ENCODE measurements at regions of chr20 and their contacts with region 1.

Region 1: DNA sequence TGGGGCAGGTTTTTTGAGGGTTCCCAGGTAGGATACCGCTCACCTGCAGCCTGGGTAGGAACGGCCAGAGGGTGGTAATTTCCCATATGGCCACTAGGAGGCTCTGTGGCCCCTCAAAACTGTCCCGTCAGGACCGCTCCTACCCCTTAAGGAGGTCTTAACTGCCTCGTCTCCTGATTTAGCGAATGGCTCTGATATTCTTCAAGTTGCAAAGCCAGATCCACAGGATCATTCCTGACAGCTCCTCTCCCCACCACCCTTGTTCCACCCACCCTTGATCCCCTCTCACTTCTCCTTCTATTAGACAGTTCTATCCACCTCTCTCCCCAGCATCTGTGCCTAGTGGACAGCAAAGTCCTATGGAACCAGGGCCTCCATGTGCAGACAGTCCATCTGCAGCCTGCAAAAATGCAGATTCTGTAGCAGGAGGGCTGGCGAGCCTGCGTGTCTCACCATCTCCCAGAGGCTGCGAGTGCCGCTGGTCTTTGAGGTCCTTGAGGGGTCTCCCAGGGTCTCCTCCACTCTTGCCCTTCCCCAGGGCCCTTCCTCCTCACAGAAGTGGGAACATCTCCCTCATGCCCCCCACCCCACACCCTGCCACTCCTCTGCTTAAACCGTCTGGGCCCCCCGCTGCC is 34.3 kb upstream of the ZBP1 start:
- DNase-seq: peak; percentile 26 to 59
- ATAC-seq: peak; percentile 54 to 78 (median 74)
- H3K4me3 ChIP-seq: no peak overlapping the region
- H3K27ac ChIP-seq: no peak overlapping the region
- H3K4me1 ChIP-seq: peaks cover 2% of the 10 kb centered on the region
- H3K27me3 ChIP-seq: no peaks in the 10 kb centered on the region
- CTCF ChIP-seq: peak; percentile 97

Region 2: DNA sequence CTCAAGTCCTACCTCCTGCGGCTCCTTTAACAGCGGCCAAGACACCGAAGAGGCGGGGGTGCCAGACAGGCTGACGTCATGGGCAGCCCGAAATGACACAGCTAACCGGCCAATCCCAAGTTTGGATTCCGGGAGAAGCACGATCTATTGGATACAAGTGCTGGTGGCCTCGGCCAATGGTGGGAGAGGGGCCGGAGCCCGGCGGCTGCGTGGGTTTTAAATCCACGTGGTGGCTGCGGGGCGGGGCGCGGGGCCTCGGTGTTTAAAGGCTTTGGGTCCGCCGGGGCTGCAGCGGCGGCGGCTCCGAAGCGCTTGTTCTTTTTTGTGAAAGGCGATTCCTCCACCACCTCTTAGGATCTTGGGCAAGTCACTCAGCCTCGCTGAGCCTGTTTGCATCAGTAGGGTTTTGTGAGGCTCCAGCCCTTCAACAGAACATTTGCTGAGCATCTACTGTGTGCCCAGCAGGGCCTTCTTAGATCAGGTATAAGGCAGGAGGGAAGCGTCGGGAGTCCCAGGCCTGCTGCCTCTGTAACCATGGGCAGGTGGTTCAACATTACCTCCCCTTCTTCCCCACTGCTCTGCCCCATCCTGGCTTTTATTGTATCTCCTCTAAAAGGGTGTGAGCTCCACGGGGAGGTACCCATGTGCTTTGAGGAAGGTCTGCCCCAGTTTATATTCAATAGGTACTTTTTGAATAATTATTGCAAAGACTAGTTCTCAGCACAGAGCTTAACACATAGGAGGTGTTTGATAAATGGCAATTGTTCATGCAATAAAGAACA is 64.2 kb after region 1 on chr20:
- intact Hi-C with region 1: loop called in 1 of 2 experiments (anchors 5 kb)
- DNase-seq: peak; percentile 95 to 97
- ATAC-seq: peak; percentile 88 to 95 (median 90)
- H3K4me3 ChIP-seq: peak overlapping the region; percentile 48
- H3K27ac ChIP-seq: peak overlapping the region; percentile 34
- H3K4me1 ChIP-seq: peaks cover 49% of the 10 kb centered on the region
- H3K27me3 ChIP-seq: no peaks in the 10 kb centered on the region
- CTCF ChIP-seq: no peak

Region 3: GRCh38 chr20:57810511-57811373 is 156.3 kb after region 1 on chr20:
- intact Hi-C with region 1: loop called in 1 of 2 experiments (anchors 10 kb)
- DNase-seq: no peak
- ATAC-seq: peak; percentile 42 to 74 (median 62)
- H3K4me3 ChIP-seq: no peak overlapping the region
- H3K27ac ChIP-seq: no peak overlapping the region
- H3K4me1 ChIP-seq: peaks cover 12% of the 10 kb centered on the region
- H3K27me3 ChIP-seq: no peaks in the 10 kb centered on the region
- CTCF ChIP-seq: no peak

Region 4: GRCh38 chr20:58028123-58028522 is 373.6 kb after region 1 on chr20:
- intact Hi-C with region 1: loop called in 1 of 2 experiments (anchors 5 kb)
- DNase-seq: no peak
- ATAC-seq: no peak
- H3K4me3 ChIP-seq: no peak overlapping the region
- H3K27ac ChIP-seq: no peak overlapping the region
- H3K4me1 ChIP-seq: no peaks in the 10 kb centered on the region
- H3K27me3 ChIP-seq: peaks cover 0 to 11% (median 0%) of the 10 kb centered on the region in 3 donors
- CTCF ChIP-seq: peak; percentile 24

Region 5: GRCh38 chr20:58087193-58087858 is 432.8 kb after region 1 on chr20:
- intact Hi-C with region 1: loop called (anchors 2 to 10 kb)
- DNase-seq: no peak
- ATAC-seq: no peak
- H3K4me3 ChIP-seq: no peak overlapping the region
- H3K27ac ChIP-seq: no peak overlapping the region
- H3K4me1 ChIP-seq: no peaks in the 10 kb centered on the region
- H3K27me3 ChIP-seq: no peaks in the 10 kb centered on the region
- CTCF ChIP-seq: peak; percentile 73

Region 6: GRCh38 chr20:58179432-58180099 is 525.1 kb after region 1 on chr20:
- intact Hi-C with region 1: loop called (anchors 1 to 2 kb)
- DNase-seq: peak; percentile 56 to 71
- ATAC-seq: peak; percentile 66 to 83 (median 72)
- H3K4me3 ChIP-seq: peak overlapping the region; percentile 41
- H3K27ac ChIP-seq: no peak overlapping the region
- H3K4me1 ChIP-seq: no peaks in the 10 kb centered on the region
- H3K27me3 ChIP-seq: peaks cover 0 to 12% (median 2%) of the 10 kb centered on the region in 3 donors
- CTCF ChIP-seq: peak; percentile 99

Region 7: GRCh38 chr20:58209652-58210397 is 555.3 kb after region 1 on chr20:
- intact Hi-C with region 1: loop called in 1 of 2 experiments (anchors 1 kb)
- DNase-seq: peak; percentile 83 to 91
- ATAC-seq: peak; percentile 92 to 96 (median 92)
- H3K4me3 ChIP-seq: no peak overlapping the region
- H3K27ac ChIP-seq: no peak overlapping the region
- H3K4me1 ChIP-seq: no peaks in the 10 kb centered on the region
- H3K27me3 ChIP-seq: peaks cover 0 to 17% (median 4%) of the 10 kb centered on the region in 3 donors
- CTCF ChIP-seq: peak; percentile 100